Caco-2 (cell line): ENCODE measurements at regions of chr11 and their contacts with region 1.

Region 1: DNA sequence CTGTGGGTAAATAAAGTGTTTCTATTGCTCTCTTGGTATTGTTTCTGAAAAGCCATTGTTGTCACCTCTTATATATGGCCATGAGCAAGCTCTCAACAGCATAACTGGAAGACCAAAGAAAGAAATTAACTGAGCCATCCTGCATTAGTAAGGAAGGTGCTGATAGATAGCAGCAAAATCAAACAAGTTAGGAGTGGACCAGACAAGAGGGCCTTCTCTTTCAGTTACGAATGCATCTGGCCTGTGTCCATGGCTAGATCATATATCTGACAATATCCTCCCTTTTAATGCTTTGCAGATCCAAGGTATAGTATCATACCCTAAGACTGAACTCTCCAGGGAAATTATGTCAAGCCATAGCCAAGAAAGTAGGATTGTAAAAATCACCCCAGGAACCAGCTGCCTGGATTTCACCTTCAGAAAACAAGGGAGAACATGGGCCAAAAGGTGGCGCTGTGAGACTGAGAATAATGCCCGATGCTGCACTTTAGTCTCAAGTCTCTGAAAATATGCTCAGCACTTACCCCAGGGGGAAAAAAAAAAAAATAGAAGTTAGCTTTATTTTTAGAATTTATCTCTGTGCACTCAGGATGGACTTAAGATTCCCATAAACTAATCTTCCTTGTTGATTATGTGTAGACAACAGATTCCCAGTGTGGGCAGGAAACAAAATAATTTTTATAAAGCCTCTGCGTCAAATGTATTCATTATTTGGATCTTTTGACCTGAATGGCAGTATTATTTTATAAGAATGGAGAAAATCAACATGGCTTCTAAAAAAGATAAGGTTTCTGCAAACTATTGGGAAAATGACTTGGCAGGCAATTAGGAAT is 415.1 kb downstream of the ETS1 start:
- DNase-seq: peak; percentile 84 to 88
- H3K4me3 ChIP-seq: no peak overlapping the region
- H3K4me3 Mint-ChIP-seq: no peak overlapping the region
- H3K27ac Mint-ChIP-seq: no peak overlapping the region
- H3K4me1 ChIP-seq: peaks cover 3% of the 10 kb centered on the region; the same call in 1 of the 2 replicates
- H3K4me1 Mint-ChIP-seq: no peaks in the 10 kb centered on the region
- H3K27me3 ChIP-seq: no peaks in the 10 kb centered on the region
- H3K27me3 Mint-ChIP-seq: peaks cover 12% of the 10 kb centered on the region
- CTCF ChIP-seq: peak; percentile 94 to 96

Region 2: GRCh38 chr11:128290106-128290840 is 118.0 kb after region 1 on chr11:
- CTCF ChIA-PET with region 1: interaction called, 4 read pairs
- POLR2A ChIA-PET with region 1: no interaction called
- intact Hi-C with region 1: loop called (anchors 1 kb)
- DNase-seq: peak in 1 of 2 experiments; percentile 78
- H3K4me3 ChIP-seq: no peak overlapping the region
- H3K4me3 Mint-ChIP-seq: no peak overlapping the region
- H3K27ac Mint-ChIP-seq: no peak overlapping the region
- H3K4me1 ChIP-seq: no peaks in the 10 kb centered on the region
- H3K4me1 Mint-ChIP-seq: no peaks in the 10 kb centered on the region
- H3K27me3 ChIP-seq: no peaks in the 10 kb centered on the region; the same call in 1 of the 2 replicates
- H3K27me3 Mint-ChIP-seq: peaks cover 14% of the 10 kb centered on the region
- CTCF ChIP-seq: peak; percentile 88 to 95

Region 3: DNA sequence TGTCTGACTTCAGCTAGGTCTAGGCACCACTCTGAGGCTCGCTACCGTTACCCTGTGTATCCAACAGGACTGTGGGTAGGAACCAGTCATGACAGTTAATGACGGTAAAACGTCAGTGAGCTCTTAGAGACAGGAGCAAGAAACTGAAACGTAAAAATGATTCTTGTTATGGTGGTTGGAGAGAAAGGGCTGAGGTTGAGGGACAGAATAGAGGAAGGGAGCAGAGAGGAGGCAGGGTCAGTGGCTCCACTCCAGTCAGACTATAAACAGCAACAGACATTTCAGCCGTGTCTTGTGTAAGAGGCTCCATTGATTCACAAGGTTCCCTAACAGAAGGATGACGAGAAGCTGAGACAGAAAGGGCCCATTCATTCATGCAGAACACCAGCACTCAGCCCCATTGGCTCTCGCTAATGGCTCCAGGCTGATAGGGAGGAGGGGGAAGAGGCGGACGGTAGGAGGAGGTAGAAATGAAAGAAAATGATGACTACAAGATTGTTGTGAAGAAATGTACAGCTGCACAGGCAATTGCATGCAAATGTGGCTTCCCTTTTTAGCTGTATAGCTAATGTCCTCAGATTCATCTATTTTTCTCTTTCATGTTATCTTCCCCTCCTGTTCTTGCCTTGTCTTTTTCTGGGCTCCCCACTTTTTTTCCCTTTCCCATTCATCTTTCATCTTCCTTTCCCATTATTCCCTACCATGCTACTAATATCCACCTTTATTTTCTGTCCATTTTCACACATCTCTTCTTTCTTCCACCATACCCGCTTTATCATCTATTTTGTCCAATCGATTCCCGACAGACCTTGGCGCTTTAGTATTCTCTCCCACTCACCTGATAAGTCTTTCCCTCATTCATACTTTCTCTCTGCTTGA is 380.8 kb after region 1 on chr11:
- CTCF ChIA-PET with region 1: interaction called, 4 read pairs
- POLR2A ChIA-PET with region 1: no interaction called
- intact Hi-C with region 1: loop called (anchors 1 kb)
- DNase-seq: no peak
- H3K4me3 ChIP-seq: no peak overlapping the region
- H3K4me3 Mint-ChIP-seq: no peak overlapping the region
- H3K27ac Mint-ChIP-seq: no peak overlapping the region
- H3K4me1 ChIP-seq: peaks cover 3% of the 10 kb centered on the region; the same call in 1 of the 2 replicates
- H3K4me1 Mint-ChIP-seq: peaks cover 7% of the 10 kb centered on the region
- H3K27me3 ChIP-seq: no peaks in the 10 kb centered on the region; the same call in 1 of the 2 replicates
- H3K27me3 Mint-ChIP-seq: peaks cover 7% of the 10 kb centered on the region
- CTCF ChIP-seq: no peak

Region 4: GRCh38 chr11:128802358-128802981 is 630.2 kb after region 1 on chr11:
- CTCF ChIA-PET with region 1: interaction called, 3 read pairs
- POLR2A ChIA-PET with region 1: no interaction called
- intact Hi-C with region 1: loop called (anchors 1 kb)
- DNase-seq: peak in 1 of 2 experiments; percentile 51
- H3K4me3 ChIP-seq: no peak overlapping the region
- H3K4me3 Mint-ChIP-seq: no peak overlapping the region
- H3K27ac Mint-ChIP-seq: no peak overlapping the region
- H3K4me1 ChIP-seq: no peaks in the 10 kb centered on the region
- H3K4me1 Mint-ChIP-seq: peaks cover 7% of the 10 kb centered on the region
- H3K27me3 ChIP-seq: no peaks in the 10 kb centered on the region
- H3K27me3 Mint-ChIP-seq: peaks cover 36% of the 10 kb centered on the region
- CTCF ChIP-seq: peak; percentile 66 to 81

Region 5: GRCh38 chr11:128956401-128957201 is 784.3 kb after region 1 on chr11:
- CTCF ChIA-PET with region 1: no interaction called
- POLR2A ChIA-PET with region 1: no interaction called
- intact Hi-C with region 1: loop called (anchors 2 kb)
- DNase-seq: peak; percentile 75 to 87
- H3K4me3 ChIP-seq: no peak overlapping the region
- H3K4me3 Mint-ChIP-seq: no peak overlapping the region
- H3K27ac Mint-ChIP-seq: no peak overlapping the region
- H3K4me1 ChIP-seq: no peaks in the 10 kb centered on the region
- H3K4me1 Mint-ChIP-seq: no peaks in the 10 kb centered on the region
- H3K27me3 ChIP-seq: no peaks in the 10 kb centered on the region
- H3K27me3 Mint-ChIP-seq: peaks cover 12% of the 10 kb centered on the region
- CTCF ChIP-seq: peak; percentile 87 to 90